Aorta (tissue), 5 donors: ENCODE measurements at regions of chr20 and their contacts with region 1.

Region 1: GRCh38 chr20:29873946-29874345 is 1383.5 kb upstream of the DEFB115 start:
- DNase-seq: peak; percentile 78 to 88
- ATAC-seq: no peak
- H3K4me3 ChIP-seq: no peak overlapping the region
- H3K27ac ChIP-seq: no peak overlapping the region
- H3K4me1 ChIP-seq: no peaks in the 10 kb centered on the region
- H3K27me3 ChIP-seq: no peaks in the 10 kb centered on the region

Region 2: DNA sequence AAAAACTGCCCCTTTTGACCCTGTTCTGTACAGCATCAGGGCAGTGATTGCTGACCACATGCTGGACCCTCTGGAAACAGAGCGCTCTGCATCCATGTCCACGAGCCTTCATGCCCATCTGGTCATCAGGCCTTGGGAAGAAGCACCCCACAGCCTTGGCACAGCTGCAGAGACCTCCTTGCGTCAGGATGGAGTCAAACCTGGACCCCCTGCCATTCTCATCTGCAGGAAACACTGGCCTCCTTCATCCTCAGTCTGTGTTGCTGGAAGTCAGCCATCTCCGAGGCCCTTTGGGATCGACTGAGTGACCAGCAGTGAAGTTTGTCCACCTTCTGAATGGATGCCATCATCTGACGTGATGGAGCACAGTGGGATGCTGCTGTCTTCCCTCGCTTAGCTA is 754.8 kb before region 1 on chr20:
- intact Hi-C with region 1: loop called in 1 of 2 experiments (anchors 10 kb)
- DNase-seq: no peak
- ATAC-seq: peak; percentile 61
- H3K4me3 ChIP-seq: no peak overlapping the region
- H3K27ac ChIP-seq: no peak overlapping the region
- H3K4me1 ChIP-seq: no peaks in the 10 kb centered on the region
- H3K27me3 ChIP-seq: no peaks in the 10 kb centered on the region

Region 3: DNA sequence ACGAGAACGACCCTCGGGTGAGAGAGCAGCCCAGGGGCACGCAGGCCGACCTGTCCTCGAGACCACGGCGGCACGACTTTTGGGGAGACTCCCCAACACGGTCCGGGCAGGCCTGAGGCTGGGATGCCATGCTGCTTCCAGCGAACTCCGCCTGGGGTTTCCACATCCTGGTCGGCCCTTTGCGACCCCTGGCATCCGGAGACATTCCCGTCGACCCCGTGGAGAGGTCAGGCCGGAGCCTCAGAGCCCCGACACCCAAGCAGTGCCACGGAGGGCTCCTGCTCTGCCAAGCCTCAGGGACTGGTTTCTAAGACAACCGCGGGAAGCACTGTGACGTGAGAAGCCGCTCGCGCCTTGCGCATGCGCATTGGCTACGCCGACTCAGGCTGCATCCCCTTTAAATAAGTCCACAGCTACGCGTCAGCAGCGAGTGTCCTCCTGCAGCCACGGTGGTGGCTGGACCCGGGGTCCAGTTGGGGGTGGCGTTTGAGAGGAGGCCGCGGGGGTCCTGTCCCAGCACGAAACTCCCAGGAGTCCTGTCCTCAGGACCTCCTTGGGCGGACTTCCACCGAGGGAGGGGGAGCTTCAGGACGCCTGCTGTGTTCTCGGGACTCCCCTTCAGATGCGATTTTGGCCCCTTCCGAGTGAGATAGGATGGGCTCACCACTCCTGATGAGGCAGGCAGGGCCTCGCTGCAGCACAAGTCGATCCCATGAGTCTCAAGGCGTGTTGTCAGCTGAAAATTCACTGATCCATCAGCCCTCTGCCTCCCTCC is 294.3 kb after region 1 on chr20:
- intact Hi-C with region 1: no loop called
- DNase-seq: peak in 1 of 2 donors; percentile 68
- ATAC-seq: no peak
- H3K4me3 ChIP-seq: no peak overlapping the region
- H3K27ac ChIP-seq: no peak overlapping the region
- H3K4me1 ChIP-seq: no peaks in the 10 kb centered on the region
- H3K27me3 ChIP-seq: no peaks in the 10 kb centered on the region

Region 4: DNA sequence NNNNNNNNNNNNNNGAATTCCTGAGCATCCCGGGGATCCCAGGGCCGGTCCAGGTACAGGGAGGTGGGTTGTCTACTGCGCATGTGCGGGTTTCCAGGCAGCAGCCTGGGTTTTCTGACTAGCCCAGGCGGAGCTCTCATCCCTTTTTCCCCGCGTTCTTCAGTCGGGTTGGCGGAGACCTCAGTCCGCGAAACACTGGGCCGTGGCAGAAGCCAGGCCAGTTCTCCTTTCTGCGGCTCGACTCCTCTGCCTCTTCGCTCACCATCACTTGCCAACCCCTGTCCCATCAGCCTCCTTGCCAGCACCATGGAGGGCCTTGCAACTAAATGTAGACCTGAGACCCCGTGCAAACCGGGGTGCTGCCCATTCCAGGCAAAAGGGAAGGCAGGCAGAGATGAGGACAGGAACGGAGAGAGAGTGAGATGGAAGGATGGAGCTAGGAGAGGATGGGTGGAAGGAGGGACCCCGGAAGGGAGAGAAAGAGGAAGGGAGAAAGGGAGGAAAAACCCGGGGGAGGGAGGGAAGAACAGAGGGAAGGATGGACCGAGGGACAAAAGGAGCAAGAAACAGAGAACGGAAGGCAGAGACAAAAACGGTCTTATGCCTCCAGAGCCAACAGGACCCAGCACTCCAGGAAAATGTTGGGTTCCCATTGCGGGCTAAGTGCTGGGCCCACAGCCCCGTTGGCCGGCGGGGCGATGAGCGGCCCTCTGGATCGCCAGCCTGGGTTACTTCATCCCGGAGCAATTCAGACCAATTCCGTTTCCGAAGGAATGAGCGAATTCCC is 938.1 kb after region 1 on chr20:
- intact Hi-C with region 1: no loop called
- DNase-seq: peak in 1 of 2 donors; percentile 71
- ATAC-seq: peak; percentile 85
- H3K4me3 ChIP-seq: no peak overlapping the region
- H3K27ac ChIP-seq: no peak overlapping the region
- H3K4me1 ChIP-seq: no peaks in the 10 kb centered on the region
- H3K27me3 ChIP-seq: no peaks in the 10 kb centered on the region